IMR-90 (cell line): ENCODE measurements at regions of chr4 and their contacts with region 1.

Region 1: GRCh38 chr4:153249199-153250041 is 45.2 kb downstream of the TRIM2 start:
- DNase-seq: peak; percentile 60
- ATAC-seq: peak; percentile 99
- H3K4me3 ChIP-seq: peak overlapping the region; percentile 64
- H3K27ac ChIP-seq: peak overlapping the region; percentile 35
- H3K4me1 ChIP-seq: peaks cover 5% of the 10 kb centered on the region; the same call in 1 of the 2 replicates
- H3K27me3 ChIP-seq: no peaks in the 10 kb centered on the region
- CTCF ChIP-seq: no peak
- POLR2A ChIP-seq: no peak
- RAD21 ChIP-seq: no peak

Region 2: GRCh38 chr4:153045111-153045982 is 204.1 kb before region 1 on chr4:
- CTCF ChIA-PET with region 1: no interaction called
- POLR2A ChIA-PET with region 1: no interaction called
- dilution Hi-C with region 1: no loop called
- in situ Hi-C with region 1: no loop called
- intact Hi-C with region 1: no loop called
- DNase-seq: no peak
- ATAC-seq: no peak
- H3K4me3 ChIP-seq: no peak overlapping the region
- H3K27ac ChIP-seq: no peak overlapping the region
- H3K4me1 ChIP-seq: no peaks in the 10 kb centered on the region
- H3K27me3 ChIP-seq: no peaks in the 10 kb centered on the region; the same call in 1 of the 2 replicates
- CTCF ChIP-seq: no peak
- POLR2A ChIP-seq: no peak
- RAD21 ChIP-seq: no peak

Region 3: DNA sequence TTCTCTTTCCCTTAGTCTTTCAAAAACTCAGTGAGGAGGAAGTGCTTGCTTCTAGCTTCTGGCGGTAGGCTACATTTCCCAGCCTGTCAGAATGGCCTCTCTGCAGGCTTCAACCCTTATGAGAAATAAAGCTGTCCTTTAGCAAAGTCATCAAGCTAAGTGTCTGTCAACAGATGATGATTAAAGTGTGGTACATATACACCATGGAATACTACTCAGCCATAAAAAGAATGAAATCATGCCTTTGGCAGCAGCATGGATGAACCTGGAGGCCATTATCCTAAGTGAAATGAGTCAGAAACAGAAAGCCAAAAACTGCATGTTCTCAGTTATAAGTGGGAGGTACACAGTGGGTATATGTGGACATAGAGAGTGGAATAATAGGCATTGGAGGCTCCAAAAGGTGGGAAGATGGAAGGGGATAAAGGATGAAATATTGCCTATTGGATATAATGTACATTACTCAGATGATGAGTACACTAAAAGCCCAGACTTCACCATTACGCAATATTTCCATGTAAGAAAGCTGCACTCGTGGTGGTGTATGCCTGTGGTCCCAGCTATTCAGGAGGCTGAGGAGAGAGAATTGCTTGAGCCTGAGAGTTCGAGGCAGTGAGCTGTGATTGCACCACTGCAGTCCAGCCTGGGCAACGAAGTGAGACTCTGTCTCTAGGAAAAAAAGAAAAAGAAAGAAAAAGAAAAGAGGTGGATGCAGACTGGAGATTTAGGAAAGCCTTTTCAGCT is 37.3 kb before region 1 on chr4:
- CTCF ChIA-PET with region 1: no interaction called
- POLR2A ChIA-PET with region 1: no interaction called
- dilution Hi-C with region 1: no loop called
- in situ Hi-C with region 1: no loop called
- intact Hi-C with region 1: no loop called
- DNase-seq: peak; percentile 77
- ATAC-seq: peak; percentile 78
- H3K4me3 ChIP-seq: no peak overlapping the region
- H3K27ac ChIP-seq: no peak overlapping the region
- H3K4me1 ChIP-seq: no peaks in the 10 kb centered on the region
- H3K27me3 ChIP-seq: no peaks in the 10 kb centered on the region
- CTCF ChIP-seq: no peak
- POLR2A ChIP-seq: no peak
- RAD21 ChIP-seq: no peak

Region 4: GRCh38 chr4:153228512-153229140 is 20.8 kb before region 1 on chr4:
- CTCF ChIA-PET with region 1: interaction called, 4 read pairs
- POLR2A ChIA-PET with region 1: no interaction called
- dilution Hi-C with region 1: no loop called
- in situ Hi-C with region 1: no loop called
- intact Hi-C with region 1: loop called (anchors 1 kb)
- DNase-seq: no peak
- ATAC-seq: no peak
- H3K4me3 ChIP-seq: no peak overlapping the region
- H3K27ac ChIP-seq: no peak overlapping the region
- H3K4me1 ChIP-seq: peaks cover 15% of the 10 kb centered on the region
- H3K27me3 ChIP-seq: no peaks in the 10 kb centered on the region
- CTCF ChIP-seq: no peak
- POLR2A ChIP-seq: no peak
- RAD21 ChIP-seq: no peak